Activated CD4-positive, alpha-beta memory T cell treated with anti-CD3 and anti-CD28 coated beads, Interleukin-2, amount 10 ng/mL, durations not matched to agents 7 days and 5 days (primary cell): ENCODE measurements at regions of chr15 and their contacts with region 1.

Region 1: GRCh38 chr15:44545913-44546802 is 9.2 kb downstream of the EIF3J start:
- DNase-seq: peak; percentile 64
- H3K4me3 Mint-ChIP-seq: peak overlapping the region; percentile 72
- H3K27ac Mint-ChIP-seq: peak overlapping the region; percentile 97
- H3K4me1 Mint-ChIP-seq: peaks cover 55% of the 10 kb centered on the region
- H3K27me3 Mint-ChIP-seq: no peaks in the 10 kb centered on the region

Region 2: DNA sequence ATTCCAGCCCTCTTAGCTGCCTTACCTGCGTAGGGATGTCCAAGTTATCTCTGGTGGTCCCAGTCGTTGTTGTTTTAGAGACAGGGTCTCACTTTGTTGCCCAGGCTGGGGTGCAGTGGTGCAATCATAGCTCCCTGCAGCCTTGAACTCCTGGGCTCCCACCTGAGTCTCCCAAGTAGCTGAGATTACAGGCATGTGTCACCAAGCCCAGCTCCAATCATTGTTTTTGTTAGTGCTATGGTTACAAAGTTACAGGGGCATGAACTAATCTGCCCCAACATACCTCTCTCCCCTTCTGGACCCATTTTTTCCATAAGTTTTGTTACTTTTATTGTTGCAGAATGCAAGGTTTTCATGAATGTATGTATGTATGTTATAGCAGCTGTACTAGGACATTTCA is 64.1 kb before region 1 on chr15:
- CTCF ChIA-PET with region 1: no interaction called
- POLR2A ChIA-PET with region 1: no interaction called
- DNase-seq: no peak
- H3K4me3 Mint-ChIP-seq: no peak overlapping the region
- H3K27ac Mint-ChIP-seq: no peak overlapping the region
- H3K4me1 Mint-ChIP-seq: peaks cover 8% of the 10 kb centered on the region
- H3K27me3 Mint-ChIP-seq: no peaks in the 10 kb centered on the region

Region 3: GRCh38 chr15:44728576-44729407 is 182.6 kb after region 1 on chr15:
- CTCF ChIA-PET with region 1: interaction called, 3 read pairs
- POLR2A ChIA-PET with region 1: interaction called, 12 read pairs
- DNase-seq: peak; percentile 97
- H3K4me3 Mint-ChIP-seq: peak overlapping the region; percentile 99
- H3K27ac Mint-ChIP-seq: peak overlapping the region; percentile 100
- H3K4me1 Mint-ChIP-seq: peaks cover 69% of the 10 kb centered on the region
- H3K27me3 Mint-ChIP-seq: no peaks in the 10 kb centered on the region

Region 4: DNA sequence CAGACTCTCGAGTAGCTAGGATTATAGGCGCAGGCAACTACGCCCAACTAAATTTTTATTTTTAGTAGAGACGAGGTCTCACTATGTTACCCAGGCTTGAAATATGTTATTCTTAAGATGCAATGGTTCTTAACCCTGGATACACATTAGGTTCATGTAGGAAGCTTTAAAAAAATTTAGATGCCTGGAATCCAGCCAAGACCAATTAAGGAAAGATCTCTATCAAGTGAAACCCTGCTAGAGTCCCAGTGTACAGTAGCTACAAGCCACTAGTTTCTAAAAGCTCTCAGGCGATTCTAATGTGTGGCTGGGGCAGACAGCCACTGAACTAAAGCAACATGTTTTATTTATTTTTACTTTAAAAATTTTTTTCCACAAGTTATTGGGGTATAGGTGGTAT is 223.4 kb after region 1 on chr15:
- CTCF ChIA-PET with region 1: no interaction called
- POLR2A ChIA-PET with region 1: no interaction called
- DNase-seq: no peak
- H3K4me3 Mint-ChIP-seq: no peak overlapping the region
- H3K27ac Mint-ChIP-seq: no peak overlapping the region
- H3K4me1 Mint-ChIP-seq: peaks cover 5% of the 10 kb centered on the region
- H3K27me3 Mint-ChIP-seq: no peaks in the 10 kb centered on the region